Right lobe of liver (tissue), 6 donors: ENCODE measurements at regions of chr12 and their contacts with region 1.

Region 1: DNA sequence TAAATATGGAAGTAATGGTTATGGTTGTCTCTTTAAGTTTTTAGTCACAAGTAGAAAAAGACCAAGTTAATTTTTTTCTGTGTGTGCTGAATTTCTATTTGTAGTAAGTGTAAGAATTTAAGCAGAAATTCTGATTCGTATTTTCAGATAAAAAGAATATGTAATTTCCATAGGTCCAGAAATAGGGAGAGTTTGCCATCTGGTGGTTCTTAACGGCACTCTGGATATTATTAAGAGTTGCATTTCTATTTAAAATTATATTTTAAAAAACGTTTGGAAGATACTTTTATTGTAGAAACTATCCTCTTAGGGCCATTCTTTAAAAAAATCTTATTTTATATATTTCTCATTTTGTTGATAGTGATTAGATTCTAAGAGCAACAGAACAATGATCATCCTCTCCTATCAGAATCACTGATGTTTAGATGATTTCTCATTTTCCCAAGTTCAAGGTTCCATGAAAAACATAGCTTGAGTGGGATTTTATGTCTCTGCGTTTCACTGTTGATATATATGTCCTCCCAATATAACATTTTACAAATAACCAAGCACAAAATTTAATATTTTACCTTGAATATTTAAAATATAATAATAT is 88.3 kb downstream of the LRRK2 start:
- DNase-seq: no peak
- ATAC-seq: peak in 2 of 4 donors; percentile 44 to 52
- H3K4me3 ChIP-seq: no peak overlapping the region
- H3K27ac ChIP-seq: no peak overlapping the region
- H3K4me1 ChIP-seq: no peaks in the 10 kb centered on the region
- H3K27me3 ChIP-seq: no peaks in the 10 kb centered on the region
- CTCF ChIP-seq: peak; percentile 53 to 73 (median 59)
- POLR2A ChIP-seq: no peak

Region 2: DNA sequence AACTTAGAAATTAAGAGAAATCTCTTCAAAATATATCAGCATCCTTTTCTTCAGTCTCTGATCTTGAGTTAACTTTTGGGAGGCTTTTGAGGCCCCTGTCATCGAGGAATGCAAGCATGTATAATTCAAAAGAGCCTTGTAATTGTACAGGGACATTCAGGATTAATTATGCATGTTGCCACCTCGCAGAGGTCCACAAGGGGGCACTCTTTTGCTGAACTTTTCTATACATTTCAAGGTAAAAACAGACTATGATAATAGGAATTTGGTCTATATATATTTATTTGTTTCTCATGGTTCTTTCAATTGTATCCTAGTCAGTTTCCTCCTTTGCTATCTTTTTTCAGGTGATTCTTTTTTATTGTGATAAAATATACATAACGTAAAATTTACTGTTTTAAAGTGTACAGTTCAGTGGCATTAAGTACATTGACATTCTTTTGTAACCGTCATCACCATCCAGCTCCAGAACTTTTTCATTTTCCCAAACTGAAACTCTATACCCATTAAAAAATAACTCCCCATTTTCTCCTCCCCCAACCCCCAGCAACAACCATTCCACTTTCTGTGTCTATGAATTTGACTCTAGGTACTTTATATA is 160.2 kb before region 1 on chr12:
- intact Hi-C with region 1: loop called (anchors 10 kb)
- DNase-seq: peak in 2 of 3 donors; percentile 39 to 60
- ATAC-seq: peak; percentile 84 to 91 (median 86)
- H3K4me3 ChIP-seq: no peak overlapping the region
- H3K27ac ChIP-seq: no peak overlapping the region
- H3K4me1 ChIP-seq: no peaks in the 10 kb centered on the region
- H3K27me3 ChIP-seq: no peaks in the 10 kb centered on the region
- CTCF ChIP-seq: peak; percentile 81 to 91 (median 91)
- POLR2A ChIP-seq: no peak

Region 3: GRCh38 chr12:40192704-40193255 is 120.3 kb before region 1 on chr12:
- intact Hi-C with region 1: no loop called
- DNase-seq: no peak
- ATAC-seq: peak in 3 of 4 donors; percentile 10 to 53 (median 36)
- H3K4me3 ChIP-seq: no peak overlapping the region
- H3K27ac ChIP-seq: no peak overlapping the region
- H3K4me1 ChIP-seq: peaks cover 0 to 22% (median 0%) of the 10 kb centered on the region in 4 donors
- H3K27me3 ChIP-seq: no peaks in the 10 kb centered on the region
- CTCF ChIP-seq: no peak
- POLR2A ChIP-seq: no peak